Breast epithelium (tissue), 4 donors: ENCODE measurements at regions of chr12 and their contacts with region 1.

Region 1: GRCh38 chr12:94080348-94081009 is 67.9 kb upstream of the PLXNC1 start:
- DNase-seq: no peak
- H3K4me3 ChIP-seq: no peak overlapping the region
- H3K27ac ChIP-seq: no peak overlapping the region
- H3K4me1 ChIP-seq: no peaks in the 10 kb centered on the region
- H3K27me3 ChIP-seq: no peaks in the 10 kb centered on the region
- CTCF ChIP-seq: no peak
- POLR2A ChIP-seq: no peak

Region 2: DNA sequence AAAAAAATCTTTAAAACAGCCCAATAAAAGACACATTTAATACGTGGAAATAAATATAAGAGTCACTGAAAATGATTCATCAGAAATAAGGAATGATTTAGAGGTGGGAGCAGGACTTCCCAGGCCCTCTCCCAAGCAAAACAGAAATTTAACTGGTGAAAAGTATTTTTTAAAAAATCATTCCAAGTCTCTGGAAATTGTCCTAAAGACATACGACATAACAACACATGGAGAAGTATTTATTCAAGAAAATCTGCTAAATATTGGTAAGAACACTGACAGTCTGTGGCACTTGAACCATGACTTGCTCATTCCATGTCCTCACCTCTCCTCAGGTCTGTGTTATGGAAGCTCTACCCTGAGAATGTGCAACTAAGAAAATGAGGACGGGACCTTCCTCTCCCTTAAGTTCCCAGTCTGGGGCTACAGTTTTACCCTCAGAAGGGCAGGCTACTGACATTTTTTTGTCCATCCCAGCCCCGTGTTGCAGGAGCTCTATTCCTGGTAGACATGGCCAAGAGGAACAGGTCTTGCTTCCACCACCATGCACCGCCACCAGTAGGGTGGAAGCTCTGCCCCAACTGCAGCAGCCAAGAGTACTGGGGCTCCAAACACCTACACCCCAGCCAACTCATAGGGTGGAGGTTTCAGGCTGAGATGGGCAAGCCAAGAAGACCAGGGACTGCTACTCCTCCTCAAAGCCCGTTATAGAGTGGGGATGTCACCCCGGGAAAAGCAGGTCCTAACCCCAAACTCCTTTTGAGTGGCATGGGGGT is 210.3 kb before region 1 on chr12:
- intact Hi-C with region 1: loop called (anchors 2 kb)
- DNase-seq: no peak
- H3K4me3 ChIP-seq: no peak overlapping the region
- H3K27ac ChIP-seq: no peak overlapping the region
- H3K4me1 ChIP-seq: no peaks in the 10 kb centered on the region
- H3K27me3 ChIP-seq: no peaks in the 10 kb centered on the region
- CTCF ChIP-seq: no peak
- POLR2A ChIP-seq: no peak